BJ (cell line): ENCODE measurements at regions of chr13 and their contacts with region 1.

Region 1: DNA sequence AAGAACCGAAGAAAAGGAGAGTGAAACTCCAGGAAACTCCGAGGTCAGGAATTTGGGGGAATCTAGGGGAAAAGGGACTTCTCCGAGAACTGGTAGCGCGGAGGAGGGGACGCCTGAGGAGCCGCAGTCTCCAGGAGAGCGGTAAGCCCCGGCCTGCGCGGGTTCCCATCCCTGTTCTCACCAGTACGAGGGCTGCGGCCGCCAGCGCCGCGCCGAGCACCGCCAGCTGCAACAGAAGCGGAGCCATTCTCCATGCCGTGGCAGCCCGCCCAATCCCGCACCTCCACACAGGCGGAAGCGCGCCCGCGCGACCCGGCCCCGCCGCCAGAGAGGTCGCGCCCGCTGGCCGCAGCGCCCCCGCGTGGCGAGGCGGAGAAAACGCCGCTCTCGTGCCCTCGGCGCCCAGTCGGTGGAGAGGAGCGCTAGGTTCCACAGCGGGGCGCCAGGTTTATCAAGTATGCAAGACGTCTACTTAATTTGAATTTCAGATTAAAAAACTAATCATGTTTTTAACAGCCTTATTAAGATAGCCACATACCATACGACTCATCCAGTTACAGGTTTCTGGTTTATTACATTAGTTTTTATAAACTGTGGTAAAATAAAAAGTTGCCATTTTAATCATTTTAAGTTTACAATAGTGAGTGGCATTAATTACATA is at the start of gene ALG5:
- DNase-seq: no peak
- H3K4me3 ChIP-seq: peak within 1 kb of the TSS; percentile 85
- H3K27me3 ChIP-seq: no peaks in the 10 kb centered on the region
- CTCF ChIP-seq: peak; percentile 70
- polyA plus RNA-seq, gene ALG5: 22.6 and 46.4 TPM in 2 replicates

Region 2: GRCh38 chr13:36530050-36530789 is 469.0 kb before region 1 on chr13:
- CTCF ChIA-PET with region 1: no interaction called
- POLR2A ChIA-PET with region 1: no interaction called
- DNase-seq: no peak
- H3K4me3 ChIP-seq: no peak overlapping the region
- H3K27me3 ChIP-seq: no peaks in the 10 kb centered on the region
- CTCF ChIP-seq: no peak

Region 3: GRCh38 chr13:36543671-36544070 is 455.5 kb before region 1 on chr13:
- CTCF ChIA-PET with region 1: no interaction called
- POLR2A ChIA-PET with region 1: no interaction called
- DNase-seq: no peak
- H3K4me3 ChIP-seq: no peak overlapping the region
- H3K27me3 ChIP-seq: no peaks in the 10 kb centered on the region; the same call in 1 of the 2 replicates
- CTCF ChIP-seq: no peak

Region 4: DNA sequence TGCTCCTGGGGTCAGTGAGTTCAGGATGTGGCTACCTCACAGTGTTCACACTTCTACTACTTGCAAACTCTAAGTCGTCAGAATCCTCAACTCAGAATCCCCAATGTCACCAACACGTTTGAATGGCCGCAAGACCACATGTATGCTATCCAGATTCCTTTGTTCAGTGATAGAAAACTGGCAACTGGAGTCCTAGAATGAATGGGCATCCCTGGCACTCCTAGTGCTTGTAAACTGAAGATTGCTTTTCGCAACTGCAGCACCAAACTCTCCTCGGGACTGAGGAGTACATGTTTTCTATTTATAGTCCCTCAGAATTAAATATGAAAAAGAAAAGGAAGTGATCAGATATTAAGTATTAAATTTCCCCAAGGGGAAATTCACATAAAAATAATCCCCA is 84.1 kb before region 1 on chr13:
- CTCF ChIA-PET with region 1: no interaction called
- POLR2A ChIA-PET with region 1: no interaction called
- DNase-seq: no peak
- H3K4me3 ChIP-seq: no peak overlapping the region
- H3K27me3 ChIP-seq: no peaks in the 10 kb centered on the region
- CTCF ChIP-seq: no peak

Region 5: GRCh38 chr13:36954542-36954941 is 44.6 kb before region 1 on chr13:
- CTCF ChIA-PET with region 1: no interaction called
- POLR2A ChIA-PET with region 1: interaction called, 15 read pairs
- DNase-seq: no peak
- H3K4me3 ChIP-seq: no peak overlapping the region
- H3K27me3 ChIP-seq: no peaks in the 10 kb centered on the region
- CTCF ChIP-seq: no peak

Region 6: DNA sequence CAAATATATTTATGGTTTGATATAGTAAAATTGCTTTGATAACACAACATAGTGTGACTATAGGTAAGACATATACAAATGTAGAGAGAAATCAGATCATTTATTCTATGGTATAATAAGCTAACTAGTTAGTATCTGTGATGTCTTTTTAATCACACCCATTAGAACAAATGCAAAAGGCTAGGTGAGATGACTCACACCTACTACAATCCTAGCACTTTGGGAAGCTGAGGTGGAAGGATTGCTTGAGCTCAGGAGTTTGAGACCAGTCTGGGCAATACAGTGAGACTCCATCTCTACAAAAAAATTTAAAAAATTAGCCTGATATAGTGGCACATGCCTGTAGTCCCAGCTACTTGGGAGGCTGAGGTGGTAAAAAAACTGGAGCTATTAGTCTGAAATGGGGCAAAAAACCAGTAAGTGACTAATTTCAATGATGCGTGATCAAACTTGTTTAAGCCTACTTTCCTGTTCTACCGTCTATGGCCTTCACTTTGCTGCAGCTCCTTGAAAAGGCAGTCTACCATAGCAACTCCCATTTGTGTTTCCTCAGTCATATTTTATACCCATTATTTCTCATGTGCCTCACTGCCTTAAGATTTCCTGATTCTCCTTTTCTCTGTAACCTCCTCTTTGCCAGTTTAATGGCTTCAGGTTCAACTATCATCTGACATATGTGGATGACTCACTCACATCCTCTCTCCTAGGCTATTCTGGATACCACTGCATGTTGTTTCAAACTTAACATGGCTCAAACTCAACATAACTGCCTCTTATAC is 12.5 kb before region 1 on chr13:
- CTCF ChIA-PET with region 1: interaction called, 13 read pairs
- POLR2A ChIA-PET with region 1: no interaction called
- DNase-seq: no peak
- H3K4me3 ChIP-seq: no peak overlapping the region
- H3K27me3 ChIP-seq: no peaks in the 10 kb centered on the region
- CTCF ChIP-seq: no peak

Region 7: DNA sequence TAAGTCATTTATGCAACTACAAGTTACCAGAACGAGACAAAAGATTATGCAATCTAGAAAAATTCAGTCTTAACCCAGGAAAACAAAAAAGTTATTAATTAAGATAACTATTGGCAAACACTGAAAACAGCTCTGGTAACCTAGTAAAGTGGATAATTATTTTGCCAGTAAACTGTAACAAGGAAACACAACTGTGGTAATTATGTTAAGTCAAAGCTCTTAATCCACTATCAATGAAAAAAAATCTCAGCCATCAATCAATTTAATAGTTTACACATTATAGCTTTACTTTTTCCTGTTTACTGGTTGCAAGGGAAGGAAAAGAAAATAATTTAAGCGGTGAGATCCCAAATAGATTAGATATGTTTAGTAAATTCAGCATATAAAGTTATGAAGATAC is 12.6 kb after region 1 on chr13:
- CTCF ChIA-PET with region 1: interaction called, 13 read pairs
- POLR2A ChIA-PET with region 1: interaction called, 6 read pairs
- DNase-seq: no peak
- H3K4me3 ChIP-seq: no peak overlapping the region
- H3K27me3 ChIP-seq: no peaks in the 10 kb centered on the region
- CTCF ChIP-seq: no peak